ENCODE measurements at regions of chr9 and their contacts with region 1.

Region 1: GRCh38 chr9:21789541-21790037 is 12.8 kb upstream of the MTAP start:
- DNase-seq: no peak
- H3K4me3 ChIP-seq: peak overlapping the region; percentile 26
- H3K27ac ChIP-seq: no peak overlapping the region
- H3K4me1 ChIP-seq: no peaks in the 10 kb centered on the region
- H3K27me3 ChIP-seq: peaks cover 45% of the 10 kb centered on the region
- CTCF ChIP-seq: peak; percentile 88

Region 2: DNA sequence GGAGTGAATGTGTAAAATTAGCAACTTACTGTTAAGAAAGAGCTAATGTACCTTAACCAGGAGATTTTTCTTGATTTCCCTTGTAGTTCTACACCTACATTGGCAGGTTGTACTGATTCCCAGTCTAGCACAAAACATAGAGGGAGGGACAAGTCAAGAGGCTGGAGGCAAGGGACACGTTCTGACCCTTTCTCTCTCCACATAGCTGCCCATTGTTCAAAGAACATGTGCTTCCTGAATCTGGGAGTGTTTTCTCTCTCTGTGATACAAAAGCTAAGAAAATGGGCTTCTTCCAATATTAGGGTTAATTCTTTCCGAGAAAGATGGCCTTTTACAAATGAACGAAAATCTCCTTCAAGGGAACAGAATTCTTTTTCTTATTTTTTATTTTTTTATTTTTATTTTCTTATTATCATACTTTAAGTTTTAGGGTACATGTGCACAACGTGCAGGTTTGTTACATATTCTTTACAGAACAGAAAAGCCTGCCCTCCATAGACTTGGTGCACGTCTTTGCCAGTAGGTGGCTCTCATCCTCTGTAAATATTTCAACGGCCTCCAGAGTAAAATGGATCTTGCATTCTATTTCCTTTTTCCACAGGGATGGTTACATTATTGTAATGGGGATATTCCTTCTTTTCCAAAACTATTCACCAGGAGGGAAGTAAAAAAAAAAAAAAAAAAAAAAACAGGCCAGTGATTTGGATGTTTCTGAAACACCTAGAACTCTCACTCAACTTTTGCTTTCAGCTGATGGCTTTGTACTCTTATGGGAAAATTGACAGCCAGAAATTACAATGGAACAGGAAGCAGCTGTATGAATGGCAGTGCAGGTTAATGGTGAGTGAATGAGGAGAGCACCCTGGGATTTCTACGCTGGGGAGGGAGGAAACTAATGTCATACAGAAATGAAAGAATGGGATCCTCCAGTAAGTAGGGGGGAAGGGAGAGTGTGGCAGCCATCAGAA is 471.3 kb before region 1 on chr9:
- intact Hi-C with region 1: loop called (anchors 2 kb)
- DNase-seq: no peak
- H3K4me3 ChIP-seq: no peak overlapping the region
- H3K27ac ChIP-seq: no peak overlapping the region
- H3K4me1 ChIP-seq: peaks cover 16% of the 10 kb centered on the region
- H3K27me3 ChIP-seq: no peaks in the 10 kb centered on the region
- CTCF ChIP-seq: peak; percentile 76

Region 3: GRCh38 chr9:21709464-21710058 is 80.0 kb before region 1 on chr9:
- intact Hi-C with region 1: loop called (anchors 10 kb)
- DNase-seq: no peak
- H3K4me3 ChIP-seq: no peak overlapping the region
- H3K27ac ChIP-seq: no peak overlapping the region
- H3K4me1 ChIP-seq: no peaks in the 10 kb centered on the region
- H3K27me3 ChIP-seq: peaks cover 34% of the 10 kb centered on the region
- CTCF ChIP-seq: peak; percentile 79